ENCODE measurements at regions of chr20 and their contacts with region 1.

Region 1: GRCh38 chr20:8602389-8603116 is 466.3 kb upstream of the PLCB4 start:
- DNase-seq: no peak
- ATAC-seq: peak in 1 of 2 donors; percentile 12

Region 2: DNA sequence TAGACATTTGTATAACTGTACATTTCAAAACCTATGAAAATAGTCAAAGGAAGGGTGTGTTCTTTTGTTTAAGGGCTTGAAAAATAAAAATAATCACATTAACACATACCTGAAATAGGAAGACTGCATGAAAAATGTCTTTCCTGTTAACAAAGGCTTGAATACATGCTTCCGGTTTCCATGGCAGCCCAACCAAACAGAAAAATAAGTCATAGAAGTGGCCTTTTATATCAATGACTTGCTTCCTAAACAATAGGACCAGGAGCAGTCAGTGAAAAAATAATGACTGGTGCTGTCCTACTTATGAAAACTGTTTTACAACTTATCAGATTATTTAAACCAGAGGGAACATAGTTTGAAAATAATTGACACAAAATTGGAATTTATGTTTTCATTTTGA is 53.8 kb after region 1 on chr20:
- intact Hi-C with region 1: loop called in 1 of 2 experiments (anchors 10 kb)
- DNase-seq: peak; percentile 28
- ATAC-seq: no peak

Region 3: GRCh38 chr20:9565910-9566550 is 963.5 kb after region 1 on chr20:
- intact Hi-C with region 1: no loop called
- DNase-seq: no peak
- ATAC-seq: no peak